Activated T-helper 1 cell treated with anti-CD3 and anti-CD28 coated beads, Interleukin-12 subunit alpha, Interleukin-12 subunit beta, Interleukin-2, Interleukin-4 antibody, amounts not matched to agents 30 ng/mL and 10 ng/mL and 1 ng/mL, durations not matched to agents 14 hours and 24 hours and 36 hours (primary cell): ENCODE measurements at regions of chr17 and their contacts with region 1.

Region 1: GRCh38 chr17:57440522-57441485 is 184.5 kb downstream of the MSI2 start:
- DNase-seq: peak; percentile 66
- H3K4me3 Mint-ChIP-seq: peak overlapping the region; percentile 72
- H3K27ac Mint-ChIP-seq: peak overlapping the region; percentile 98
- H3K4me1 Mint-ChIP-seq: peaks cover 93% of the 10 kb centered on the region
- H3K27me3 Mint-ChIP-seq: peaks cover 2% of the 10 kb centered on the region

Region 2: DNA sequence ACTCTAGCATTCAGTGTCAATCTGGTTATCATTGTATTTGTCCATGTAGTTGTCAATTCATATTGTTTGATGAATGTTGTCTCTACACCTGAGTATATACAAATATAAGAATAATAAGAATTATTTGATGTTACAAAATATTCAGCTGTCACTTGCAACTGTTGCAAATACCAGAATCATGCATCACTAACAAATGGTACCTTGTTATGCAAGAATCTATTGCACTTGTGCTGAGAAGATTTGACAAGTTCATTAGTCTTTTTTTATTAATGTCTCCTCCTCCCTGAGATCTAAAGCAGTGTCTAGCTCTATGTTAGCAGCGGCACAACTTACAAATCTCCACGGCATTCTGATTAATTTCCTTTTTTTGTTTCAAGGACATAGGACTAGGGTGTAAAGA is 377.9 kb before region 1 on chr17:
- intact Hi-C with region 1: no loop called
- DNase-seq: no peak
- H3K4me3 Mint-ChIP-seq: no peak overlapping the region
- H3K27ac Mint-ChIP-seq: no peak overlapping the region
- H3K4me1 Mint-ChIP-seq: no peaks in the 10 kb centered on the region
- H3K27me3 Mint-ChIP-seq: peaks cover 9% of the 10 kb centered on the region

Region 3: GRCh38 chr17:57130761-57131461 is 309.9 kb before region 1 on chr17:
- intact Hi-C with region 1: loop called (anchors 10 kb)
- DNase-seq: peak; percentile 61
- H3K4me3 Mint-ChIP-seq: no peak overlapping the region
- H3K27ac Mint-ChIP-seq: peak overlapping the region; percentile 52
- H3K4me1 Mint-ChIP-seq: peaks cover 11% of the 10 kb centered on the region
- H3K27me3 Mint-ChIP-seq: no peaks in the 10 kb centered on the region

Region 4: DNA sequence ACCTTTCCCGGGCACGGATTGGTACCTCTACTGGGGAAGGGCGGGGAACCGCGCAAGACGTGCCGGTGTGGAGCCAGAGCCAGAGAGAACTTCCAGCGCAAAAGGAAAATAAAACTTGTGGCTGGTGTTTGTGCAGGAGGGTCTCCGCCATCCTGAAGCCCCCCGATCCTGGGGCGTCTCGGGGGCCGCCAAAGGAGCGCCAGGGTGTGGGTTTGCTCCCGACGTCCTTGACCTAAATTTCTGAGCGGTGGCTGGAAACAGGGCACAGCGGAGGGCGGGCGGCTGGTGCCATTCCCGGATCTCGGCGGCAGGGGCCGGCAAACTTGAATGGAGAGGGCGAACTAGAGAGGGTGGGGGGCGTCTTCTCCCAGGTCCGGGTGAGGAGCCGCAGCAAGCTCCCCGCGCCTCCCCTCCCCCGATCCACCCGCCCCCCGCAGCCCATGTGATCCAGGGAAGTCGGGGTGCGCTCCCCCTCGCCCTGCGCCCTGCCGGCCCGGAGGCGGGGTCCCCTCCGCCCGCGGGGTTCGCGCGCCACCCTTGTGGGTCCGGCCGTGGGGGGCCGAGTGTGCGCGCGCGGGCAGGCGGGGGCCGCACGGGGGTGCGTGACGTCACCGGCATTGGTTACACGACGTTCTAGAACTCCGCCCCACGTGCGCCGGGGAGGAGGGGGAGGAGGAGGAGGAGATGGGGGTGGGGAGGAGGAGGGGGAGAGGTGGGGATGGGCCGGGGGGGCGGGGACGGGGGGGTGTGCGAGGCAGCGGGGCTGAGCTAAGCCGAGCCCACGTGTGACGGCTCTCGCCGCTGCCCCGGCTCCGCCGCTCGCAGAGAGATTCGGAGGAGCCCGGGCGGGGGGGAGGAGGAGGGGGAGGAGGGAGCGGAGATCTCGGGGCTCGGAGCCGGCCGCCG is 184.8 kb before region 1 on chr17 and contains the start of gene MSI2:
- intact Hi-C with region 1: loop called (anchors 1 kb)
- DNase-seq: peak; percentile 84
- H3K4me3 Mint-ChIP-seq: peak within 1 kb of the TSS; percentile 89
- H3K27ac Mint-ChIP-seq: peak within 1 kb of the TSS; percentile 93
- H3K4me1 Mint-ChIP-seq: peaks cover 47% of the 10 kb centered on the region
- H3K27me3 Mint-ChIP-seq: no peaks in the 10 kb centered on the region
- total RNA-seq, gene MSI2: 272 and 278 TPM in 2 replicates

Region 5: DNA sequence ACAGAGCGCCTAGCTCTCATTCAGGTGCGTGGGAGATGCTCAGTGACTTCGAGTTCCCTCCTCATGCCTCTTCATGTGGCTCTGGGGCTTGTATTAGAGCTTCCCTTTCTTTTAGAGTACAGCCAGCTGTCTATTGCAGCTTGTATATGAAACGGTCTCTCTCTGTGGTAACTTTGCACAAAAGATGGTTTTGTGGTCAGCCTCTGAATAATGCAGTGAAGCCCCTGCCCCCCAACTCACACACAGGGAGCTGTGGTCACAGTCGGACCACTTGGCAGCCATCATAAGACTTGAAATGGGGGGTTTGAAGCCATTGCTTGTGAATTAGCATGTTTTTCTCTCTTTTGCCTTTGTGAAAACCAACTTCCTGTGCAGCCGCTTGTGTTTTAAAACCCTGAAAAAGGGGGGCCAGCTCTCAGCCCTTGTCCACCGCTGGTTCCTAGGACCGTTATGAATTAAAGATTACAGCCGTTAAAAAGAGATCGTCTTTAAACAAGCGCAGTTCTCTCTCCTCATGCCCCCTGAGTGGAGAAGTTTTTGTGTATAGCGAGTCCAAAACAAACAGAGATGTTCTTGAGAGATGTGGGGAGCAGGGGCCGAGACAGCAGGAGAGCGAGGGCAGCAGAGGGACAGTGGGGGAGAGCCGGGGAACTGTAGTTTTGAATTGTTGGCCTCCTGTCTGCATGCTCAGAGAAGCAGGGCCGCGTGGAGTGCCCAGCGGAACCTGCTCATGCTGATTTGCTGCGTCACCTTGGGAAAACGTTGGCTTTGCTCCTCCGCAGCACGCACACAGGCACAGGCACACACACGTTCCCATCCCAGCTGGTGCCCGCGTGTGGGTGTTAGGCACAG is 14.5 kb after region 1 on chr17:
- intact Hi-C with region 1: loop called (anchors 1 kb)
- DNase-seq: peak; percentile 33
- H3K4me3 Mint-ChIP-seq: peak overlapping the region; percentile 55
- H3K27ac Mint-ChIP-seq: peak overlapping the region; percentile 91
- H3K4me1 Mint-ChIP-seq: peaks cover 83% of the 10 kb centered on the region
- H3K27me3 Mint-ChIP-seq: no peaks in the 10 kb centered on the region

Region 6: DNA sequence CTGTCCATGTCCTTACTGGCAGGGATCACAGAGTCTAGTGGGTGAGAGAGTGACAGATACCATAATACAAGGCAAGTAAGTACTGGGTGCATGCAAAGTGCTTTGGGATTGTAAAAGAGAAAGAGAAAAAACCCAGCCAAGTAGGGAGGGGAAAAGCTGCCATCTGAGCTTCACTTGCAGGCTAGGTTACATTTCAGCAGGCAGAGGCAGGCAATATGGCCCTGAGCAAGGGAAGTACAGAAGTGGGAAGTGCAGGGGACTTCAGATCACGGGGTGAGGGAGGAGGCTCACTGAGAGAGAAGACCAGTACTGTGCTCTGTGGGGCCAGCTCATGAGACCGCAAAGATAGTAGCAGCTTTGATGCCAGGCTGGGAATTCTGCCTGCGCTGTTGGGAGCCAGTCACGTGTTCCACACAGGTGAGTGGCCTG is 46.1 kb after region 1 on chr17:
- intact Hi-C with region 1: loop called (anchors 1 kb)
- DNase-seq: no peak
- H3K4me3 Mint-ChIP-seq: peak overlapping the region; percentile 27
- H3K27ac Mint-ChIP-seq: peak overlapping the region; percentile 33
- H3K4me1 Mint-ChIP-seq: peaks cover 64% of the 10 kb centered on the region
- H3K27me3 Mint-ChIP-seq: no peaks in the 10 kb centered on the region

Region 7: DNA sequence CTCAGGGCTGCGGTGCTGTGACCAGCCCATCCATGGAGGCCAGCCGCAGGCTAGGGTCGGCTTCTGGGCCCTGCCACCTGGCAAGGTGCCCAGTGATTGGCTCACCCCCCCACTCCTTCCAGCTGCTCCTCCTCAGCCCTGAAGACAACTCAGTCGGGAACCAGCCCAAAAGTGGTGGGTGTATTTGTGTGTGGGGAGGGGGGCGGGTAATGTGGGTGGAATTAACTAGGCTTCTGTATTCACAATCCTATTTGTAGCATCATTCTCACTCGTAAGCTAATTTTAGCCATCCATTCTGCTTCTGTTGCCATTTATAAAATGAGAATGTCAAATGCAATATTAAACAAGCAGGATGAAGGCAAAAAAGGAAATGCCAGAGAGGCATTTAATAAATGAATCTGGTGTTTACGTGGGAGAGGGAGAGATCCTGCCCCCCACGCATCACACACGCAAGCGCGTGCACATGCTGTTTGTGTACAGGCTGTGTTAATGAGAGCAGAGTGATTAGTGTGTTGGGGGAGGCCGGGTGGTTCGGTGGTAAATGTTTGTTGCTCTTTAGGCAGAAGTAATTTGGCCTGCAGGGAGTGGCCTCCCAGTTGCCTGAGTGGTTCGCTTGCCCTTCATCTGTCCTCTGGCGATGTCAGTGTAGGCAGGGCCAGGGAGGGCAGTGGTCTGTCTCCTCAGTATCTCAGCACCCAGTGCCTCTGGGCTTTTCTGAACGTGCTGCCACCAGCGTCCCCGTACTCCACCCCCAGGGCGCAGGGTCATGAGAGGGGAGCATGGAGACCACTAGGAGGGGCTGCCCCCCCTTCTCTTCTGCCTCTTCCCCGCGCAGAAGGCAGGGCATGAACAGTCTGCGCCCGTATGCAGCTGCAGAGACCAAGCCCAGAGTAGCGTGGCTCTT is 164.2 kb after region 1 on chr17:
- intact Hi-C with region 1: loop called (anchors 5 kb)
- DNase-seq: no peak
- H3K4me3 Mint-ChIP-seq: peak overlapping the region; percentile 54
- H3K27ac Mint-ChIP-seq: peak overlapping the region; percentile 94
- H3K4me1 Mint-ChIP-seq: peaks cover 70% of the 10 kb centered on the region
- H3K27me3 Mint-ChIP-seq: no peaks in the 10 kb centered on the region